ENCODE measurements at regions of chr10 and their contacts with region 1.

Region 1: GRCh38 chr10:86500846-86501245 is 20.7 kb downstream of the WAPL start:
- DNase-seq: no peak
- ATAC-seq: no peak
- H3K4me3 Mint-ChIP-seq: no peak overlapping the region
- H3K27ac Mint-ChIP-seq: no peak overlapping the region
- H3K4me1 Mint-ChIP-seq: peaks cover 9% of the 10 kb centered on the region
- H3K27me3 Mint-ChIP-seq: no peaks in the 10 kb centered on the region
- CTCF ChIP-seq: no peak

Region 2: DNA sequence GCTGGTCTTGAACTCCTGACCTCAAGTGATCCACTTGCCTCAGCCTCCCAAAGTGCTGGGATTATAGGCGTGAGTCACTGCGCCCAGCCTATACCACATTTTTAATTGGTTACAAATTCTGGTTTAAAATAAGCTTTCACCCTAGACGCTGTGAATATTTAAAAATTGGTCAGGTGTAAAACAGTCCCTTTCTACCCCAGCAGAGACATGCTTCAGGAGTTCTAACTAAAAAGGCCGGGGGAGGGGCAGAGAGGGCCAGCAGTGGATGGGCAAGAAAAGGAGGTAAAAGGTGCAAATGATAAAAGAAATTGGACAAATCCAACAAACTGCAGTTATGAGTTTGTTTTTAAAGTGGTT is 49.3 kb before region 1 on chr10:
- CTCF ChIA-PET with region 1: no interaction called
- POLR2A ChIA-PET with region 1: no interaction called
- intact Hi-C with region 1: loop called (anchors 5 kb)
- DNase-seq: no peak
- ATAC-seq: peak; percentile 31
- H3K4me3 Mint-ChIP-seq: no peak overlapping the region
- H3K27ac Mint-ChIP-seq: no peak overlapping the region
- H3K4me1 Mint-ChIP-seq: peaks cover 41% of the 10 kb centered on the region
- H3K27me3 Mint-ChIP-seq: no peaks in the 10 kb centered on the region
- CTCF ChIP-seq: no peak

Region 3: DNA sequence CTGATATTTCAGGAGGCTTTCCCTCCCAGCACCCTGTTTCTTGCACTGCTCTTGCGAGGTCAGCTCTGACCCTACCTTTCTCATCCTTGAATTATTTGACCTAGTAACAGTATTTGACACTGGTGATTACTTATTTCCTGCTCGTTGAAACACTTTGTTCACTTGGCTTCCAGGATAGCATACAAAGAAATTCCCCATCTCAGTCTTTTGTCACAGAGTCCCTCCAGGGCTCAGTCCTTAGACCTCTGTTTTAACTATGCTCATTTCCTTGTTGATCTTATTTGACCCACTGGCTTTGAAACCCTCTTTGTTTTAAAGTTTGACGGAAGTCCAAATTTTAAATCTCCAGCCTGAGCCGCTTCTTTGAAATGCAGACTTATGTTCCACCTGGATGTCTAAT is 285.5 kb after region 1 on chr10:
- CTCF ChIA-PET with region 1: no interaction called
- POLR2A ChIA-PET with region 1: no interaction called
- intact Hi-C with region 1: no loop called
- DNase-seq: no peak
- ATAC-seq: no peak
- H3K4me3 Mint-ChIP-seq: no peak overlapping the region
- H3K27ac Mint-ChIP-seq: no peak overlapping the region
- H3K4me1 Mint-ChIP-seq: peaks cover 8% of the 10 kb centered on the region
- H3K27me3 Mint-ChIP-seq: no peaks in the 10 kb centered on the region
- CTCF ChIP-seq: no peak

Measured in activated B cell treated with CpG ODN at 0.5 μM for 24 hours (primary cell).